MCF 10A (cell line): ENCODE measurements at regions of chr2 and their contacts with region 1.

Region 1: DNA sequence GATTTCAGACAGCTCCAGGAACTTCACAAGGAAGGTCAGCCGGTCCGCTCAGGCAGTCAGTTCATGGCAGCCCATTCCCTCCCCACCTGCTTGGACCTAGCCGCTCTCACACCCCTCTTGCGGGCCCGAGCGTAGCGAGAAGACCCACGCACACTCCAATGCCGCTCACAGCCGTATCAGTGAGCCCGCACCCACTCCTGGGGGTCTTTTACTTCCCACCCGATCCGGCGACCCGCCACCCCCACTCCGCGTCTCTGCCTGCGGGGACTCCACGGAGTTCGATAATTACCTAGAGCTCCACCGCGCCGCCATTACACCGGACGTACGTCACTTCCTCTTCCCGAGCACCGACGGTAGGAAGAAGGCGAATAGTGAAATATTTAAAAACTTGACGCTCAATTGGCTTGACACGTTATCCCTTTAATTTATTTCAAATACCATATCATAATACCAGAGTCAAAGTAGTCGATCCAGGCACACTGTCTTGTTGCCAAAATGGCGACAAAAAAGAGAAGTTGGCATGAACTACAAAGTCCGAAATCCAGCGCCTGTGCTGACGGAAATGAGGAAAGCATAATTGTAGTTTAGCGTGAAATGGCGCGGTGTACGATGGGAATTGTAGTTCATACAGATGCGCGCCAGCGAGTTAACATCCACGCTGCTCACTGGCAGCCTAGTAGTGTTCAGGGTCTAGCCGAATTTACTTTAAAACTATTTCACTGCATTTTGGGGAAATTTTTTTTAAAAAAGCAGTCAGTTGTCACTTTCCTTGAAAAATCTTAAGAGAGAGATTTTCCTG is at the start of gene CWC22:
- DNase-seq: peak; percentile 92
- H3K4me3 Mint-ChIP-seq: peak within 1 kb of the TSS; percentile 93
- H3K27ac Mint-ChIP-seq: peak within 1 kb of the TSS; percentile 100
- H3K4me1 Mint-ChIP-seq: peaks cover 28% of the 10 kb centered on the region
- H3K27me3 Mint-ChIP-seq: no peaks in the 10 kb centered on the region
- CTCF ChIP-seq: no peak
- total RNA-seq, gene CWC22: 34.0 and 38.8 TPM in 2 replicates

Region 2: DNA sequence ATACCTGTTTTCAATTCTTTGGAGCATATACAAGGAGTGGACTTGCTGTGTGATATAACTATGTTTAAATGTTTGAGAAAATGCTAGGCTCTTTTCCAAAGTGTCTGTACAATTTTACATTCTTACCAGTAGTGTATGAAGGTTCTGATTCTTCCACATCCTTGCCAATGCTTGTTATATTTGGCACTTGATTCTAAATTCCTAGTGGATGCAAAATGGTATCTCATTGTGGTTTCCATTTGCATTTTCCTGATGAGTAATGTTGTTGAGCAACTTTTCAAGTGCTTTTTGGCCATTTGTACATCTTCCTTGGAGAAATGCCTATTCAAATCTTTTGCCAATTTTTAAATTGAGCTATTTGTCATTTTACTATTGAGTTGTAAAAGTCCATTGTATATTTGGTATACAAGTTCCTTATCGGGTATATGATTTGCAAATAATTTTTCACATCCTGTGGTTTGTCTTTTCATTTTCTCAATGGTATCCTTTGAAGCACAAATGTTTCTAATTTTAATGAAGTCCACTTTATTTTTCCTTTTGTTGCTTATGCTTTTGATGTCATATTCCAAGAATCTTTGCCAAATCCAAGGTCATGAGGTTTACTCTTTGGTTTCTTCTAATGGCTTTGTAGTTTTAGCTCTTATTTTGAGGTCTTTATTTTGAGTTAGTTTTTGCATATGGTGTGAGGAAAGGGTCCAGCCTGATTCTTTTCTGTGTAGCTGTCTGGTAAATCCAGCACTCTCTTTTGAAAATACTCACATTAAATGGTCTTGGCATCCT is 33.4 kb after region 1 on chr2:
- CTCF ChIA-PET with region 1: interaction called, 6 read pairs
- POLR2A ChIA-PET with region 1: interaction called, 11 read pairs
- intact Hi-C with region 1: loop called (anchors 5 kb)
- DNase-seq: peak; percentile 92
- H3K4me3 Mint-ChIP-seq: no peak overlapping the region
- H3K27ac Mint-ChIP-seq: no peak overlapping the region
- H3K4me1 Mint-ChIP-seq: peaks cover 16% of the 10 kb centered on the region
- H3K27me3 Mint-ChIP-seq: no peaks in the 10 kb centered on the region
- CTCF ChIP-seq: no peak